PC-3 (cell line): ENCODE measurements at regions of chr2 and their contacts with region 1.

Region 1: DNA sequence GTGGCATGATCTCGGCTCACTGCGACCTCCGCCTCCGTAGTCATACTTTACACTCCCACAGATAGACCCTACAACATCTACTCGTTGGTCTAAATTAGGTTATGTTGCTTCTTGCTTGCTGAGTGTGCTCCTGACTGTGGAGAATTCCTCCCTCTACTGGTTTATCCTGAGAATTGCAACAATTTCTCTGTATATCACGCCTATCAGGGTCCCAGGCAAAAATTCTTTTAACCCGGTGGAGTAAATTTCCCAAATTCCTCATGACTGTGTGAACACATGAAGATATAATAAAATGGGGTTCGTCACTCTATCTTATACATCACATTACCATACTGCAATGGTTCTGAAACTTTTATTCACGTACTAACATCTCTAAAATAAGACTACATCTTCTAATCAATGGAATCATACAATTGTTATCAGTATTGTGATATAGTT is 156.7 kb downstream of the EVA1A start:
- DNase-seq: peak; percentile 76
- ATAC-seq: peak; percentile 97
- H3K4me3 ChIP-seq: no peak overlapping the region
- H3K27ac ChIP-seq: no peak overlapping the region
- H3K4me1 ChIP-seq: no peaks in the 10 kb centered on the region
- H3K27me3 ChIP-seq: peaks cover 42% of the 10 kb centered on the region
- CTCF ChIP-seq: peak; percentile 86

Region 2: DNA sequence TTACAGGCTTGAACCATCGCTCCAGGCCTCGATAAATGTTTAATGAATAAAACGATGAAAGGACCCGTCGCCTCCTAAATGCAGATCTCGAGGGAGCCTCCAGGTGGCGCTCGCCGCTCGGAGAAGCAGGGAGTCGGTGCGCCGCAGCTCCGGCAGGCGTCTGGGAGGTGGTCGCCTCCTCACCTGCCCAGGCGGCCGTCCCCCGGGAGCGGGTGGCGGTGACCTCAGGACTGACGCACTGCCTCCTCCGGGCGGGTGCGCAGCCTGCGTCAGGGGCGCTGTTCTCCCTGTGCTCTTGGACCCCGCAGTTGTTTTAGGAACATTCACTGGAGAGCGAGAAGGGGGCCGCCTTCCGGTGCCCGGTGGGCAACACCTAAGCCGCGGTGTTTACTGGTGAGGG is 484.2 kb before region 1 on chr2:
- CTCF ChIA-PET with region 1: no interaction called
- POLR2A ChIA-PET with region 1: no interaction called
- intact Hi-C with region 1: loop called (anchors 5 kb)
- DNase-seq: peak; percentile 77
- ATAC-seq: peak; percentile 34
- H3K4me3 ChIP-seq: peak overlapping the region; percentile 73
- H3K27ac ChIP-seq: no peak overlapping the region
- H3K4me1 ChIP-seq: peaks cover 40% of the 10 kb centered on the region
- H3K27me3 ChIP-seq: no peaks in the 10 kb centered on the region
- CTCF ChIP-seq: peak; percentile 82

Region 3: DNA sequence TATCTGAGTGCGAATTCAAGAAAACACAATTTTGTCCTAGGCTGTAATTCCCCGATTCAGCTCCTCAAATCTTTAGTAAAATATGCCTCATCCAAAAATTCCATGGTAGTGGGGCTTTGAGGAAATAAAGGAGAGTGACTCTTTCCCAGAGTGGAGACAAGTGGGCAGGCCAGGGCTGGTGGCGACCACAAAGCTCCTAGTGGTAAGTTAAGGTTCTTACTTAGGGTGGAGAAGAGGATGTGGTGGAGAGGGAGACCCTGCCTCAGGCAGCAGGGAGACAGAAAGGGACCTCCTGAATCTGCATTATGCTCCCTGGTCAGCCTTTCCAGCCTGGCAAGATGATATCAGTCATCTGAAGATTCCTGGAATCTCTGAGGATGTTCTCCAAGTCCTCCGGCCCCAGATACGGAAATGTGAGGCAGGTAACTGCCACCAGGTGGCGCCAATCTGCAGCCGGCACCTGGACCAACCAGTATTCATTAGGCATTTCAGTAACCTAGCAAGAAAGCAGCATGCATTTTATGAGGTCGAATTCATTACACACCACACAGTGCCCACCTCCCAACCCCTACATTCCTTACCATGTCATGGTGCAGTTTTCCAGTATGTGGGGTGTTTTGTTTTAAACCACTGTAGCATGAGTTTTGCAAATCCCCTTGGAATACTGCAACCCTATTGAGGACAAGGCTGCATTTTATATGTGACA is 339.2 kb before region 1 on chr2:
- CTCF ChIA-PET with region 1: no interaction called
- POLR2A ChIA-PET with region 1: no interaction called
- intact Hi-C with region 1: loop called (anchors 5 kb)
- DNase-seq: peak; percentile 72
- ATAC-seq: peak; percentile 86
- H3K4me3 ChIP-seq: no peak overlapping the region
- H3K27ac ChIP-seq: no peak overlapping the region
- H3K4me1 ChIP-seq: no peaks in the 10 kb centered on the region
- H3K27me3 ChIP-seq: no peaks in the 10 kb centered on the region
- CTCF ChIP-seq: peak; percentile 97

Region 4: DNA sequence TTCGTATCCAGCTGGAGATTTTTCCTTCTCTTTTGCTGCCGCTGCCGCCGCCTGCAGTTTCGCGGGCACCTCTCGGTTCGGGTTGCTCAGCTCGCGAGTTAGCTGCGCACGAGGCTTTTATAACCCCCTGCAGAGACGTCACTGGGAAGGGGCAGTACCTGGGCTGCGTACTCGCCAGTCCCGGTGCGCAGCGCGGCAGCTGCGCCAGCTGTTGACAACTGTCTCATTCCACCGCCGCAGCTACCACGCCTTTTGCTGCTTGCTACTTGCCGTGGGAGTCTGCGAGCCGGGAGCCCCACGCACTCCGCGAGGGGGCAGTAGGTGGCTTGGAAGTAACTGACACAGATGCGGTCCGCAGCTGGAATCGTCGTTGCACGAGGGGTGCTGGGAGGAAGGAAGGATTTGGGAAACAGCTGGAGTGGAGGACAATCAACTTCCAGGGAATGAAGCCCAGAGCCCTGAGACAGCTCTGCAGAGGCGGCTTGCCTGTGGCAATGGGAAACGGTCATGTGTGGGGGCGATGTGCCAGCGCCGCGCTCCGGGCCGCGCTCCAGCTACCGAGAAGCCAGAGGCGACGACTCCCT is 204.5 kb before region 1 on chr2 and contains the start of gene TACR1:
- CTCF ChIA-PET with region 1: interaction called, 3 read pairs
- POLR2A ChIA-PET with region 1: no interaction called
- intact Hi-C with region 1: loop called (anchors 1 kb)
- DNase-seq: peak; percentile 53
- ATAC-seq: peak; percentile 81
- H3K4me3 ChIP-seq: peak within 1 kb of the TSS; percentile 56
- H3K27ac ChIP-seq: no peak within 1 kb of the TSS
- H3K4me1 ChIP-seq: peaks cover 13% of the 10 kb centered on the region
- H3K27me3 ChIP-seq: peaks cover 84% of the 10 kb centered on the region
- CTCF ChIP-seq: peak; percentile 74
- total RNA-seq, gene TACR1: not detected in 2 replicates

Region 5: DNA sequence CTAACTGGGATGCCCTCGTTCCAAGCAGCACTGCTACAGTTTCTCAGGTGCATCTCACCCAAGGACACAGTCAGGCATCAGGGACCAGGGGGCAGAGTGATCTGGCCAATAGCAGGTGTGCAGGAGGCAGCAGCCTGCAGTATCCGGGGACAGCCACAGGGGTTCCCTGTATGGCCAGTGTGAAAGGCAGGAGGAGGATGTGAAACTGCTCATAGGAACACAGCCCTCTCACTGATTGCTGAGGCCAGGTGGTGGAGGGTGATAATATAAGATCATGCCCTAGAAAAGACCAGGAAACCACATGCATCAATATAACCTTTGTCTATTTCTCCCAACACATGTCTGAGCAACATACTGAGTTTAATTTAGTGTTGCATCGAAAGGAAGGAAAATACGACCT is 92.0 kb before region 1 on chr2:
- CTCF ChIA-PET with region 1: no interaction called
- POLR2A ChIA-PET with region 1: no interaction called
- intact Hi-C with region 1: loop called (anchors 10 kb)
- DNase-seq: no peak
- ATAC-seq: 0 out of 2 replicates have a peak, but pooled peaks have one; percentile 7
- H3K4me3 ChIP-seq: no peak overlapping the region
- H3K27ac ChIP-seq: no peak overlapping the region
- H3K4me1 ChIP-seq: peaks cover 27% of the 10 kb centered on the region
- H3K27me3 ChIP-seq: no peaks in the 10 kb centered on the region
- CTCF ChIP-seq: peak; percentile 39; the same call in 1 of the 2 replicates

Region 6: GRCh38 chr2:75466708-75467311 is 62.8 kb after region 1 on chr2:
- CTCF ChIA-PET with region 1: no interaction called
- POLR2A ChIA-PET with region 1: no interaction called
- intact Hi-C with region 1: no loop called
- DNase-seq: peak; percentile 65
- ATAC-seq: no peak; the same call in 1 of the 2 replicates
- H3K4me3 ChIP-seq: no peak overlapping the region
- H3K27ac ChIP-seq: no peak overlapping the region
- H3K4me1 ChIP-seq: no peaks in the 10 kb centered on the region
- H3K27me3 ChIP-seq: no peaks in the 10 kb centered on the region
- CTCF ChIP-seq: peak; percentile 81